OCI-LY7 (cell line): ENCODE measurements at regions of chrX and their contacts with region 1.

Region 1: GRCh38 chrX:54182864-54183608 is at the start of gene FAM120C:
- DNase-seq: peak; percentile 73
- H3K4me3 ChIP-seq: peak within 1 kb of the TSS; percentile 96
- H3K27ac ChIP-seq: peak within 1 kb of the TSS; percentile 76
- H3K4me1 ChIP-seq: peaks cover 28% of the 10 kb centered on the region
- CTCF ChIP-seq: no peak
- total RNA-seq, gene FAM120C: 16.0 and 21.4 TPM in 2 replicates

Region 2: DNA sequence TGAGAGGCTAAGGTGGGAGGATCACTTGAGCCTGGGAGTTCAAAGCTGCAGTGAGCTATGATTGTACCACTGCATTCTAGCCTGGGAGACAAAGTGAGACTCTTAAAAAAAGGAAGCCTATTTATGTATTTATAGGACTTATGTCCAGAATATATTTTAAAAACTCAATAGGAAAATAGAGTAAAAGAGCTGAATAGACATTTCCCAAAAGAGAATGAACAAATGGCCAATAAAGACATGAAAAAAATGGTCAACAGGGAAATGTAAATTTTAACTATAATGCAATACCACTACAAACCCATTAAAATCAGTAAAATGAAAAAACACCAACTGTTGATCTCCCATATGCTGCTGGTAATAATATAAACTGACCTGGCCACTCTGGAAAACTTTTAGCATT is 611.5 kb before region 1 on chrX:
- CTCF ChIA-PET with region 1: no interaction called
- POLR2A ChIA-PET with region 1: no interaction called
- intact Hi-C with region 1: no loop called
- DNase-seq: no peak
- H3K4me3 ChIP-seq: no peak overlapping the region
- H3K27ac ChIP-seq: no peak overlapping the region
- H3K4me1 ChIP-seq: peaks cover 8% of the 10 kb centered on the region
- CTCF ChIP-seq: no peak

Region 3: GRCh38 chrX:54044126-54044876 is 138.7 kb before region 1 on chrX and contains the start of gene PHF8:
- CTCF ChIA-PET with region 1: no interaction called
- POLR2A ChIA-PET with region 1: interaction called, 3 read pairs
- intact Hi-C with region 1: loop called (anchors 1 kb)
- DNase-seq: peak; percentile 94
- H3K4me3 ChIP-seq: peak within 1 kb of the TSS; percentile 92
- H3K27ac ChIP-seq: peak within 1 kb of the TSS; percentile 88
- H3K4me1 ChIP-seq: peaks cover 13% of the 10 kb centered on the region
- CTCF ChIP-seq: no peak
- total RNA-seq, gene PHF8: 29.7 and 47.0 TPM in 2 replicates

Region 4: GRCh38 chrX:54171527-54172250 is 11.3 kb before region 1 on chrX:
- CTCF ChIA-PET with region 1: no interaction called
- POLR2A ChIA-PET with region 1: no interaction called
- intact Hi-C with region 1: no loop called
- DNase-seq: no peak
- H3K4me3 ChIP-seq: no peak overlapping the region
- H3K27ac ChIP-seq: no peak overlapping the region
- H3K4me1 ChIP-seq: peaks cover 8% of the 10 kb centered on the region
- CTCF ChIP-seq: no peak

Region 5: DNA sequence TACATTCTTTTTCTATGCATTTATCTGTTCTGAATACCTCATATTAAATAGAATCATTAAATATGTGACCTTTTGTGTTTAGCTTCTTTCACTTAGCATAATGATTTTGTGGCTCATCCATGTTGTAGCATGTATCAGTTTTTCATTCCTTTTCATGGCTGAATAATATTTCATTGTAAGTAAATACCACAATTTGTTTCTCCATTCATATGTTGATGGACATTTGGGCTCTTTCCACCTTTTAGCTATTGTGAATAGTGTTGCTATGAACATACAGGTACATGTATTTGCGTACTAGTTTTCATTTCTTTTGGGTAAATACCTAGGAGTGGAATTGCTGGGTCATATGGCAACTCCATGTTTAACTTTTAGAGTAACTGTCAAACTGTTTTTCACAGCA is 432.1 kb after region 1 on chrX:
- CTCF ChIA-PET with region 1: no interaction called
- POLR2A ChIA-PET with region 1: no interaction called
- intact Hi-C with region 1: no loop called
- DNase-seq: no peak
- H3K4me3 ChIP-seq: no peak overlapping the region
- H3K27ac ChIP-seq: no peak overlapping the region
- H3K4me1 ChIP-seq: no peaks in the 10 kb centered on the region
- CTCF ChIP-seq: no peak